Prostate gland (tissue), 2 donors: ENCODE measurements at regions of chr11 and their contacts with region 1.

Region 1: DNA sequence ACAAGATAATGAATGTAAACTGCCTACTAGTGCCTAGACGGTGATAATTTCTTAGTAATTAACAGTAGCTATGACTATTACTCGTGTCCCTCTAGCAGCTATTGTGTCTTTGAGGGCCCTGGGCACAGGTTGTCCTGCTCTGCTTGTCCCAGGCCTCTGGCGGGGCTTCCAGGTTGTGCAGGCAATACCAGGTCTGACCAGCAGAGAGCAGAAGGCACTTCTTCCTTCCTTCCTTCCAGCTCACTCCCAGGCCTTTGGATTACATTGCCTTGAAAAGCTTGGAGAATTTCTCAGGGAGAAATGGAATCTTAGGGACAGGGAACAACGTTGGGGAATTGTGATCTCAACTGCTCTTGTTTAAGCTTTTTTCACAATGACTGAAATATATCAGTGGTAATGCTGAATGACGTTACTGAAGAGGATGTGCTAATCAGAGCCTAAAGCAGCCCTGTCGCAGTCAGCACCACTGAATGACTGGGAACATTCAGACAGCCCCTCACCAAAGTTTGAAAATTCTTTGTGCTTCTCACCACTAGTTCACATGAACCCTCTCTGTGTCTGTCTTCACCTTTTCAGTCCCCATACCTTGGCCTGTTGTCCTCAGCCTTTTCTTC is 8.4 kb upstream of the CCKBR start:
- DNase-seq: peak; percentile 34
- H3K4me3 ChIP-seq: no peak overlapping the region
- H3K27ac ChIP-seq: peak overlapping the region in 1 of 2 donors; percentile 67
- H3K4me1 ChIP-seq: peaks cover 5% of the 10 kb centered on the region
- H3K27me3 ChIP-seq: no peaks in the 10 kb centered on the region
- CTCF ChIP-seq: peak; percentile 46 to 85 (median 74)
- POLR2A ChIP-seq: no peak

Region 2: DNA sequence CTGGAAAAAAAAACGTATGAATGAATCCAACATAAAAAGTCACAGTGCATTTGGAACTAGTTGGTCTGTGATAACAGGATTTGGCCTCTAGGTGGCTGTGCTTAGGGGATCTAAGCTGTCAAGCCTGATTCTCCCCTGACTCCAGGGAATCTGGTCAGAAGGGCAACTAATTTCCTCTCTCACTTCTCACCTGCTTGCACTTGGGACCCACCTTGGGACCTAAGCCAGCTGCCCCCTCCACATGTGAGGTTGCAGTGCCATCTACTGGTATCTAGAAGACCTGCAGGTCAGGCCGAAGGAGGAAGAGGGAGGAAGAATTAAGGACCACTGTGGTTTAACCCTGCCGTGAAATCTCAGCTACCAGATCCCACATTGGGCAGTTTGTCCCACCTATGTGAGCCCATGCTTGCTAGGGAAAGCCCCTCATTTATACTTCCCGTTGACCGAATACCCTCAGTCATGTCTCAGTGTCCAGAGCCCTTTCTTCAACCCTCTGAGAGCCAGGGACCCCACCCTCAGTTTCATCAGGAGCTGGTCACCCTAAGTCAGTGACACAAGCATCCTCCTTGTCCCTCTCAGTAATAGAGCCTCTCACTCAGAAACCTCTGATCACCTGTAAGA is 102.2 kb after region 1 on chr11:
- intact Hi-C with region 1: loop called (anchors 5 kb)
- DNase-seq: peak; percentile 22
- H3K4me3 ChIP-seq: no peak overlapping the region
- H3K27ac ChIP-seq: no peak overlapping the region
- H3K4me1 ChIP-seq: no peaks in the 10 kb centered on the region
- H3K27me3 ChIP-seq: no peaks in the 10 kb centered on the region
- CTCF ChIP-seq: peak; percentile 74 to 84 (median 81)
- POLR2A ChIP-seq: no peak